H1 (cell line): ENCODE measurements at regions of chr1 and their contacts with region 1.

Region 1: DNA sequence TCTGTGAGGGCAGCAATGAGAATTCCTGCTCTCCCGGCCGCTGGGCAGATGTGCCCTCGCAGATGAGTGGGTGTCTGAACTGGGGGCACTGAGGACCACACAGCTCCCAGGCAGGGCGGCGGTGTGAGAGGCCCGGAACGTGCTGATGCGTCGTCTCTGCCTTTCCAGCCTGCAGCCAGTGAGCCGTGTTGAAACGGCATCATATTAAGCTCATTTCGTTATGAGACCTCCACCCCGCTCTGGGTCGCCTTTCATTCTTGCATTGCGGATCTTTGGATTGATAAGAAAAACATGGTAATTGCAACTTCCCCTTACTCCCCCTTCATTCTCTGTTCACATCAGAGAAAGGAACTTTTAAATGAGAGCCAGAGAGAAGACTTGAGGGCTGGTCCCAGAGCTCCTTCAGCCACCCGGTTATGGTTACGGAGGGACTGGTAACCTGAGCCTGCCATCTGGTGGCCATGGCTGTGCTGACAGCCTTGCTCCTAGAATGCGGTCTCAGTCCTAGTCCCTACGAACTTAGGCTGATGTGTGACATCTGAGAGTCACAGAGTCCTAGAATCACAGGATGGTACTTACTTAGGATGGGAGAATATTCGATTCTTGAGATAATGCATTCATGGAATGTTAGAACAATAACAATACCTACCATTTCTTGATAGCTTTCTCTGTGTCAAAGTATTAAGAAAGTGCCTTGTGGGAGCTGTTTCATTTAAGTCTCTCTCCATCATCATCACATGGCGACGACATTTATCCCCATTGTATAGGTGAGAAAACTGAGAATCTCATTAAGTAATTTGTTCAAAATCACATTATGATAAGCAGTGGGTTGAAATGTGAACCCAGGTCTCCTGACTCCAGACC is 271.0 kb downstream of the TRABD2B start:
- DNase-seq: peak in 1 of 2 experiments; percentile 84
- H3K4me3 ChIP-seq: peak overlapping the region in 1 of 4 experiments; percentile 55; a peak in 2 of 8 replicates
- H3K27ac ChIP-seq: no peak overlapping the region
- H3K4me1 ChIP-seq: peaks cover 0 to 14% (median 9%) of the 10 kb centered on the region in 4 experiments; a peak in 6 of 7 replicates
- H3K27me3 ChIP-seq: peaks cover 14 to 37% (median 31%) of the 10 kb centered on the region in 4 experiments
- CTCF ChIP-seq: peak; percentile 89 to 98 (median 97)
- EP300 ChIP-seq: no peak
- POLR2A ChIP-seq: no peak
- RAD21 ChIP-seq: peak; percentile 88

Region 2: GRCh38 chr1:47532921-47533792 is 193.1 kb before region 1 on chr1:
- CTCF ChIA-PET with region 1: interaction called, 46 read pairs
- POLR2A ChIA-PET with region 1: interaction called, 3 read pairs
- DNase-seq: peak in 1 of 2 experiments; percentile 84
- H3K4me3 ChIP-seq: peak overlapping the region; percentile 48 to 67 (median 58)
- H3K27ac ChIP-seq: no peak overlapping the region
- H3K4me1 ChIP-seq: peaks cover 3 to 10% (median 7%) of the 10 kb centered on the region in 4 experiments
- H3K27me3 ChIP-seq: peaks cover 0 to 7% (median 4%) of the 10 kb centered on the region in 4 experiments; a peak in 2 of 7 replicates
- CTCF ChIP-seq: 0 out of 4 replicates have a peak, but pooled peaks of 1 of the 3 experiments have one; percentile 2
- EP300 ChIP-seq: no peak
- POLR2A ChIP-seq: no peak
- RAD21 ChIP-seq: no peak

Region 3: DNA sequence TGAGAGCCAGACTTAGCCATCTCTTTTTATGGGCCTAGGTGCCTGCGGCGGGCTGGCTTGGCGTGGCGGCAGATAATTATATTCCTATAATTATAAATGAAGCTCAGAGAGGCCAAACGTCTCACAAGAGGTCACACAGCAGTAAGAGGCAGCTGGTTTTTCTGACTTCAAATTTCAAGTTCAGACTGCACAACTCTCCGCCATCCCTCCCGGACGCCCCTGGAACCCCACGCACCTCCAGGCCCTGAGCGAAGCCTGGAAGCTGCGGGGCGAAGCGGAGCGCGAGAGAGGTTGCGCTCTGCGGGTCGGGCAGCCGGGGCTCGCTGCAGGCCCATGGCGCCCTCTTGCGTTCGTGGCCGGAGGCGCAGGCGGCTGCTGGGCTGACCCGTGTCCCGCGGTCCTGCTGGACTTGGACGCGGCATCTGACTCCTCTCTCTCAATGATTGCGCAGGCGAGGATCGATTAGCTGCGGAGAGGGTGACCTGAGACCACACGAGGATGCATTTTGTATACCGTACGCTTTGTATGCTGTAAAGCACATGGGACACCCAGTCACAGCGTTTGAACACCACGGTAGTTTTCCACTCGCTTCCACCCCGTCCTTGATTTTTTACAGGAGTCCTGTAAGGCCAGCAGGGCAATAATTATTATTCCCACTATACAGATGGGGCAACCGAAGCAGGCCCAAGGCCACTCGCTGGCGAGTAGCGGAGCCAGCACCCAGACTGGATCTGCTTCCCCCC is 15.7 kb before region 1 on chr1:
- CTCF ChIA-PET with region 1: interaction called, 129 read pairs
- POLR2A ChIA-PET with region 1: no interaction called
- DNase-seq: peak in 1 of 2 experiments; percentile 97
- H3K4me3 ChIP-seq: peak overlapping the region; percentile 20 to 63 (median 47); a peak in 4 of 8 replicates
- H3K27ac ChIP-seq: no peak overlapping the region
- H3K4me1 ChIP-seq: peaks cover 0 to 19% (median 5%) of the 10 kb centered on the region in 4 experiments; a peak in 3 of 7 replicates
- H3K27me3 ChIP-seq: peaks cover 44 to 74% (median 71%) of the 10 kb centered on the region in 4 experiments
- CTCF ChIP-seq: peak; percentile 93 to 97 (median 97)
- EP300 ChIP-seq: no peak
- POLR2A ChIP-seq: no peak
- RAD21 ChIP-seq: peak; percentile 93 to 96

Region 4: GRCh38 chr1:47745725-47746597 is 19.7 kb after region 1 on chr1:
- CTCF ChIA-PET with region 1: interaction called, 17 read pairs
- POLR2A ChIA-PET with region 1: no interaction called
- DNase-seq: no peak
- H3K4me3 ChIP-seq: no peak overlapping the region
- H3K27ac ChIP-seq: no peak overlapping the region
- H3K4me1 ChIP-seq: no peaks in the 10 kb centered on the region
- H3K27me3 ChIP-seq: peaks cover 0 to 3% (median 0%) of the 10 kb centered on the region in 4 experiments; a peak in 1 of 7 replicates
- CTCF ChIP-seq: no peak
- EP300 ChIP-seq: no peak
- POLR2A ChIP-seq: no peak
- RAD21 ChIP-seq: no peak